Motor neuron (in vitro differentiated cells): ENCODE measurements at regions of chr18 and their contacts with region 1.

Region 1: DNA sequence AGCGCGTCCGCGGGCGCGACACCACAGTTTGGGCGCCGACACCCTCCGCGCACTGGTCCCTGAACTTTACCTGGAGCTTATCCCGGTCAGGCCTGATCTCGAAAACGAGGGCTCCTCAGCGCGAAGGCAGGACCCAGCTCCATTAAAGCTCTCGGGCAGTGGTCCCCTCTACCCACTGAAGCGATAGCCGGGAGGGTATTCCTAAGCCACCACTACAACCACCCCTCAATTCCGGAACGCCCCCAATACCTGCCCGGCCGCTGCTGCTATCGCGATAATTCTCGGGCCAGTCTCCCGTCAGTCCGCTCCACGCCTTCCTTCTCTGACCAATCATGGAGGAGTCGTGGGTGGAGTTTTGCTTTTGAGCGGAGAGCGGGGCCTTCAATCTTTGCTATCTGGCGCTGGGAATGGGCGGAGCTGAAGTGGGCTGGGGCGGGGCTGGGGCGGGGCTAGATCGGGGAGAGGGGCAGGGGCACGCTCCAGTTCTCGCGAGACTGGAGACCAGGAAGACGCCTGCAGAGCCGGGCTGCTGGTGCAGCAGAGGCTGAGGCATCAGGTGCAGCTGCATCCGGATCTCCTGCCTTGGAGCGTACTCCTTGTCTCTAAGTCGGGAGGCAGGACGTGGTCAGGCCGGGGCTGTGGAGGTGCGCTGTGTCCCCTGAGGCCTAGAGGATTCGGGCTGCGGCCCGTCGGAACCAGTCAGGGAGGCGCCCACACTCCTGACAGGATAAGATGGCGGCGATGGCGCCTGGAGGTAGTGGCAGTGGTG is at the starts of genes PIGN and RELCH:
- ATAC-seq: peak; percentile 84 to 93 (median 91)
- H3K4me3 ChIP-seq: peak within 1 kb of the TSS; percentile 77 to 96 (median 83)
- H3K27ac ChIP-seq: peak within 1 kb of the TSS; percentile 93
- H3K4me1 ChIP-seq: peaks cover 2 to 12% of the 10 kb centered on the region in 2 donors
- total RNA-seq, gene PIGN: 10.3 to 38.8 (median 15.6) TPM
- total RNA-seq, gene RELCH: 24.1 to 41.9 (median 31.3) TPM

Region 2: DNA sequence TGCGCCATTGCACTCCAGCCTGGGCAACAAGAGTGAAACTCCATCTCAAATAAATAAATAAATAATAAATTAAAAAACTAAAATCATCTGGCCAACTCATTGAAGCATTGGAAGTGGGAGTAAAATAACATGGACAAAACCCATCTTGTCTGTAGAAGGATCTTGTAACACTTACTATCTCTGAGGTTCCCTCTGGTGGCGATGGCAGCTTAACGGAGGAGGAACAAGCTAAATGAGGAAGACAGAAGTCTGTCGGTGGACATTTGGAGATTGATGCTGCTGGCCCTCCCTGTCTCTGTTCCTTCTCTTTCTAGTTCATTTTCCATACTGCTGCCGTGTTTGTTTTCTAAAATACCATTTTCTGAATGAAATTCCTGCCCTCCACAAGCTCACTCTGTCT is 379.2 kb after region 1 on chr18:
- in situ Hi-C with region 1: loop called in 1 of 9 experiments (anchors 25 kb)
- ATAC-seq: peak in 1 of 8 experiments; percentile 44
- H3K4me3 ChIP-seq: no peak overlapping the region
- H3K27ac ChIP-seq: no peak overlapping the region
- H3K4me1 ChIP-seq: no peaks in the 10 kb centered on the region

Region 3: GRCh38 chr18:62584241-62585120 is 397.5 kb after region 1 on chr18:
- in situ Hi-C with region 1: loop called in 1 of 9 experiments (anchors 25 kb)
- ATAC-seq: peak; percentile 77 to 91 (median 86)
- H3K4me3 ChIP-seq: no peak overlapping the region
- H3K27ac ChIP-seq: no peak overlapping the region
- H3K4me1 ChIP-seq: peaks cover 3% of the 10 kb centered on the region in 2 donors

Region 4: GRCh38 chr18:62729487-62730386 is 542.8 kb after region 1 on chr18:
- in situ Hi-C with region 1: no loop called
- ATAC-seq: no peak
- H3K4me3 ChIP-seq: no peak overlapping the region
- H3K27ac ChIP-seq: no peak overlapping the region
- H3K4me1 ChIP-seq: peaks cover 0 to 12% of the 10 kb centered on the region in 2 donors